ENCODE measurements at regions of chr12 and their contacts with region 1.

Region 1: GRCh38 chr12:7108796-7109571 is at the start of gene C1RL:
- DNase-seq: peak; percentile 94
- ATAC-seq: peak; percentile 85
- H3K4me3 ChIP-seq: peak within 1 kb of the TSS; percentile 77
- H3K27ac ChIP-seq: peak within 1 kb of the TSS; percentile 98
- H3K4me1 ChIP-seq: peaks cover 27% of the 10 kb centered on the region
- H3K27me3 ChIP-seq: no peaks in the 10 kb centered on the region
- CTCF ChIP-seq: peak; percentile 99
- total RNA-seq, gene C1RL: 91.6 TPM

Region 2: GRCh38 chr12:6927379-6928024 is 181.5 kb before region 1 on chr12 and contains the start of gene ATN1:
- intact Hi-C with region 1: no loop called
- DNase-seq: peak; percentile 90
- ATAC-seq: peak; percentile 68
- H3K4me3 ChIP-seq: peak within 1 kb of the TSS; percentile 84
- H3K27ac ChIP-seq: peak within 1 kb of the TSS; percentile 92
- H3K4me1 ChIP-seq: peaks cover 55% of the 10 kb centered on the region
- H3K27me3 ChIP-seq: no peaks in the 10 kb centered on the region
- CTCF ChIP-seq: no peak
- total RNA-seq, gene ATN1: 149 TPM

Region 3: DNA sequence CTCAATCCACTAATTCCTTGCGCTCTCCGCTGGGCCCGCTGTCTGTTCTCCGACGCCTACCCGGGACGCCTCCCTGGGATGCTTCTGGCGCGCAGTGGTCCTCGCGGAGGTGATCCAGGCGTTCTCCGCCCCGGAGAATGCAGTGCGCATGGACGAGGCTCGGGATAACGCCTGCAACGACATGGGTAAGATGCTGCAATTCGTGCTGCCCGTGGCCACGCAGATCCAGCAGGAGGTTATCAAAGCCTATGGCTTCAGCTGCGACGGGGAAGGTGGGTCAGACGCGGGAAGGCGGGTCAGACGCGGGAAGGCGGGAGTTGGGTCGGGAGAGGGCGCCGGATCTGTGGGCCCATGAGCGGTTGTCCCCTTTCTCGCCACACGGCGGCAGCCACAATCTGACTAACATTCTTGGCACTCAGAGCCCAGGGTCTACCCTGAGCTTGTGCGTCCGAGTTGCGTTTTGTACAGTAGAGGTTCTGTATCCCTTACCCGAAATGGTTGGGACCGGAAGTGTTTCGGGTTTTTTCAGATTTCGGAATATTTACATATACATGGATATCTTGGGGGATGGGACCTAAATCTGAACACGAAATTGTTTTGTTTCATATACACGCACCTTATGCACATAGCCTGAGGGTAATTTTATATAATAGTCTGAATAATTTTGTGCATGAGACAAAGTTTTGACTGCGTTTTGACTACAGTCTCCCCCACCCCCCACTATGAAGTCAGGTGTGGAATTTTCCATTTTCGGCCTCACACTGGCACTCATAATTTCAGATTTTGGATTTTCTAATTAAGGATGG is 164.4 kb before region 1 on chr12:
- intact Hi-C with region 1: loop called (anchors 10 kb)
- DNase-seq: peak; percentile 96
- ATAC-seq: peak; percentile 81
- H3K4me3 ChIP-seq: peak overlapping the region; percentile 62
- H3K27ac ChIP-seq: peak overlapping the region; percentile 93
- H3K4me1 ChIP-seq: peaks cover 43% of the 10 kb centered on the region
- H3K27me3 ChIP-seq: no peaks in the 10 kb centered on the region
- CTCF ChIP-seq: peak; percentile 89

Region 4: DNA sequence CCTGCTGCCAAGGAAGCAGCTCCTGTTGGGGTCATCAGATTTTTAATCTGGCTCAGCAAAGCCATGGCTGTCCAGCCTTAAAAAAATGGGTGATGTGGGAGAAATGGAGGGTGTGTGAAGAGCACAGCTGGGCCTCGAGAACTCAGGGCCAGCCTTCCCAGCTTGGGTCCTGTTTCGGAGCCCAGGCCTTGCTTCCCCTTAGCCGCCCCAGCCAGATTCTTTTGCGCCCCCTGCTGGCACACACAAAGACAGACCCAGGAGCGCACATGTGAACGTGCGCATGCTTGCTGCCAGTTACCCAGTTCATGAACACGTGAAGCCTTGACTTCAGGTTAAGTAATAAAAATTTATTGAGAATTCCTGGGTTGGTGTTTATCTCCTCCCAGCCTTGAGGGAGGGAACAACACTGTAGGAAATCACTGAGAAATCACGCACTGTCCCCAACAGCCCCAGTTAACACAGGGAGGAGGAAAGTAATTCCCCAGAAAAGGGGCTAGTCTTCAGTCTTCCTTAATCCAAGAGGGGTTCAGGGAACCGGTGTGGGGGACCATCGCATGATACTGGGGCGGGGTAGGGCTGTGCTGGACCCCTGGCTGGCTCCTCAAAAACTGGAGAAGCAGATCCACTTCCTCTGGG is 143.8 kb before region 1 on chr12:
- intact Hi-C with region 1: loop called (anchors 10 kb)
- DNase-seq: peak; percentile 91
- ATAC-seq: peak; percentile 61
- H3K4me3 ChIP-seq: peak overlapping the region; percentile 46
- H3K27ac ChIP-seq: peak overlapping the region; percentile 67
- H3K4me1 ChIP-seq: peaks cover 50% of the 10 kb centered on the region
- H3K27me3 ChIP-seq: no peaks in the 10 kb centered on the region
- CTCF ChIP-seq: peak; percentile 88

Region 5: DNA sequence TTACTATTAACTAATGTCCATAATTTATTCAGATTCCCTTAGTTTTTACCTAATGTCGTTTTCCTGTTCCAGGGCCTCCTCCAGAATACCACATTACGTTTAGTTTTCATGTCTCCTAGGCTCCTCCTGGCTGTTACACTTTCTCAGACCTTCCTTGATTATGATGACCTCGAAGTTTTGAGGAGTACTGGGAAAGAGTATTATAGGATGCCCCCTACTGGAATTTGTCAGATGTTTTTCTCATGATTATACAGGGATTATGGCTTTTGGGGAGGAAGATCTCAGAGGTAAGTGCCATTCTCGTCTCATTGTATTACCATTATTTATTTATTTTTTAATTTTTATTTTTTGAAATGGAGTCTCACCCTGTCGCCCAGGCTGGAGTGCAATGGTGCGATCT is 66.1 kb before region 1 on chr12:
- intact Hi-C with region 1: no loop called
- DNase-seq: no peak
- ATAC-seq: peak; percentile 91
- H3K4me3 ChIP-seq: no peak overlapping the region
- H3K27ac ChIP-seq: no peak overlapping the region
- H3K4me1 ChIP-seq: peaks cover 7% of the 10 kb centered on the region
- H3K27me3 ChIP-seq: no peaks in the 10 kb centered on the region
- CTCF ChIP-seq: peak; percentile 50

Region 6: GRCh38 chr12:7155481-7156034 is 46.6 kb after region 1 on chr12:
- intact Hi-C with region 1: no loop called
- DNase-seq: peak; percentile 93
- ATAC-seq: peak; percentile 81
- H3K4me3 ChIP-seq: peak overlapping the region; percentile 39
- H3K27ac ChIP-seq: peak overlapping the region; percentile 63
- H3K4me1 ChIP-seq: peaks cover 6% of the 10 kb centered on the region
- H3K27me3 ChIP-seq: no peaks in the 10 kb centered on the region
- CTCF ChIP-seq: no peak